ENCODE measurements at regions of chr5 and their contacts with region 1.

Region 1: GRCh38 chr5:112208699-112209615 is 210.1 kb downstream of the EPB41L4A start:
- DNase-seq: no peak
- ATAC-seq: no peak

Region 2: DNA sequence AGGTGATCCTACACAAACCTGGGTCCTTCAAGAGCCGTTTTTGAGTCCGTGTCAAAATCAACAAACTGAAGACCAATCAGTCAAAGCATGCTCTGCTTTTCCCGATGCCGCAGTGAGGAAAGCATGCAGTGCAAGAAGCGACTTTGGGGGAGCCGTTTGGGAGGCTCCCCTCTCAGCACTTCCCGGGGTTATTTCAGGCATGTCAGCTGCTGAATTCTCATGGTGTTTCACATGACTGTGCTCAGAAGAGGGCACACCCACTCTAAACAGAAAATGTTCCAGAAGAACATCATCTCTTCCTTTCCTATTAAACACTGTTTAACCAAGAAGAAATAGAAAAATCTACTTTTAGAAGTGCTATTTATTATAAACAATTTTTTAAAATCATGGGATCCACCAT is 84.6 kb after region 1 on chr5:
- intact Hi-C with region 1: loop called (anchors 10 kb)
- DNase-seq: no peak
- ATAC-seq: peak; percentile 86

Region 3: GRCh38 chr5:112419986-112420864 is 211.3 kb after region 1 on chr5:
- intact Hi-C with region 1: loop called (anchors 10 kb)
- DNase-seq: peak; percentile 92
- ATAC-seq: peak; percentile 93

Measured in left ventricle myocardium superior (tissue), 1 donor.